ENCODE measurements at regions of chr7 and their contacts with region 1.

Region 1: GRCh38 chr7:54773472-54774399 is 14.7 kb upstream of the SEC61G start:
- DNase-seq: peak; percentile 59
- ATAC-seq: peak; percentile 76
- H3K4me3 Mint-ChIP-seq: peak overlapping the region; percentile 72
- H3K27ac Mint-ChIP-seq: no peak overlapping the region
- H3K4me1 Mint-ChIP-seq: peaks cover 3% of the 10 kb centered on the region
- H3K27me3 Mint-ChIP-seq: peaks cover 23% of the 10 kb centered on the region

Region 2: DNA sequence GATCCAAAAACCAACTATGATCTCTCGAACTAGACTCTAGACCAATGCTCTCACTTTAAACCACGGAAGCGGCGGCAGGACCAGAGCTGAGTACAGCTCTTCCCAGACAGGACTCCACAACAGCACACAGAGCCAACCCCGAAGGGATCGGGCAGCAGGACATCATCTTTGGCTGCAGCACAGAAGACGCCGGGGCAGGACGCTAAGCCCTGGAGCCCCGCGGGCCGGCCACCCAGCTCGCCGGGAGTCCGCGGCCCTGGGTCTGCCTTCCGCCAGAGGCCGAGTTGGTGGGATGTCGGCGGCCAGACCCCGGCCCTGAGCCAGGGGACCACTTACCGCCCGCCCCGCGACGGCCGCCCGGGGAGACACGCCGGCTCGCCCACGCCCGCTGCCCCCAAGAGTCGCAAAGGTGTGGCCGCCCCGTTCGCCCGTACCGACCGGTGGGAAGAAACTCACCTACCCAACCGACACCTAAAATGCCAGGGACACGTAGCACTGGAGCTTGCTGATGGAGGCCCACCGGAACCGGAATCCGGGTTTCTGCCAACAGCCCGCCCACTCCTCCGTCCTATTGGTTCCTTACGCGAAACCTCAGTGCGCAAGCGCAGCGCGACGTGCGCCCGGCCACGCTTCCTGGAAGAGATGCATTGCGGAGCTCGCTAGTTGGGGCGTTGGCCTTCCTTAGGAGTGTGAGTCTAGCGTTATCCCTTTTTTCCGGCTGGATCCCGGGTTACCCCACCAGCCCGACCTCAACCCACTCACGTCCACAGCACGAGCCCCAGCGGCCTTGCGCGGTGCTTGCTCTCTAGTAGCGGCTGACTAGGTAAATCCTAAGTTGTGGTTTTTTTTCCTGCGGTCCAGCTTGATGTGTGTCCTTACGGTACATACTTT is 14.8 kb before region 1 on chr7 and contains the start of gene SEC61G:
- POLR2A ChIA-PET with region 1: interaction called, 12 read pairs
- DNase-seq: peak; percentile 93
- ATAC-seq: peak; percentile 96
- H3K4me3 Mint-ChIP-seq: peak within 1 kb of the TSS; percentile 100
- H3K27ac Mint-ChIP-seq: peak within 1 kb of the TSS; percentile 93
- H3K4me1 Mint-ChIP-seq: peaks cover 14% of the 10 kb centered on the region
- H3K27me3 Mint-ChIP-seq: peaks cover 5% of the 10 kb centered on the region
- total RNA-seq, gene SEC61G: 93.4 to 96.0 TPM

Region 3: DNA sequence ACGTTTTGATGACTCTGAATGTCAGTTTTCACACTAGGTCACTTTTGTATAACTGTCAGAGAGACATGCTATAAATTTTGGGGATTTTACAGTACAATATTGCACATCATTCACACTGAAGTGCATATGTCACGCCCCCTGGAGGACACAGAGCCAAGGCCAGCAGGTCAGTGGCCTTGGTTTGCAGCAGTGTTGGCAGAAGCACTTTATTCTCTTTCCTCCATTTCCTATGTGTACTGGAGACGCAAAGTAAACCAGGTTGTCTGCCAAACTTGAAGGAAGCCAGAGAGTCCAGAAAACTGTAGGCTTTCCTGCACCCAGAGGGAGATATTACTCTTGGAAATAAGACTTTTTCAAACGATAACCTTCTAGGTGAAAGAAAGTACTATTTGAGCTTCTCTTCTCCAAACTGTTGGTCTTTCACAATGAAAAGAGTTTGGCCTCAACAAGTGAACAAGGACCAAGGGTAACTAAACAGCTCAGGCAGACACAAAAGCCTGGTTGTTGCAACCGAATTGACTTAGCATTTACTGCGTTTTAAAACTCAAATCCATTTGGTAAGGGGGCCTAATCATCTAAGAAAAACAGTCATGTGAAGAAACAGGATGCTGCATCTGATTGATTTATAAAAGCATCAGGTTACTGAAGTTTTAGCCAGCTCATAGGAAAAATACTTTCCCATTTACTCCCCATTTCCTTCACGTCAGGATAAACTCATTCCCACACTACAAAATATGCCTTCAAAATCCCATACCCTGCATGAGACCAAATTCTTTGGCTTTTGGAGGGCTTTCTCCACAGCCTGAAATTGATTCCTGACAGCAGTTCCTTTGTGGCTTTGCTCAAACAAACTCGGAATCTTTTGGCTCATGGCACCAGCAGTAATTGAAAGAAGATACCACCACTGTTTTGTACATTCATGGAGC is 68.3 kb after region 1 on chr7:
- POLR2A ChIA-PET with region 1: no interaction called
- DNase-seq: no peak
- ATAC-seq: no peak
- H3K4me3 Mint-ChIP-seq: no peak overlapping the region
- H3K27ac Mint-ChIP-seq: no peak overlapping the region
- H3K4me1 Mint-ChIP-seq: peaks cover 2% of the 10 kb centered on the region
- H3K27me3 Mint-ChIP-seq: peaks cover 3% of the 10 kb centered on the region